Vagina (tissue), 2 donors: ENCODE measurements at regions of chr6 and their contacts with region 1.

Region 1: DNA sequence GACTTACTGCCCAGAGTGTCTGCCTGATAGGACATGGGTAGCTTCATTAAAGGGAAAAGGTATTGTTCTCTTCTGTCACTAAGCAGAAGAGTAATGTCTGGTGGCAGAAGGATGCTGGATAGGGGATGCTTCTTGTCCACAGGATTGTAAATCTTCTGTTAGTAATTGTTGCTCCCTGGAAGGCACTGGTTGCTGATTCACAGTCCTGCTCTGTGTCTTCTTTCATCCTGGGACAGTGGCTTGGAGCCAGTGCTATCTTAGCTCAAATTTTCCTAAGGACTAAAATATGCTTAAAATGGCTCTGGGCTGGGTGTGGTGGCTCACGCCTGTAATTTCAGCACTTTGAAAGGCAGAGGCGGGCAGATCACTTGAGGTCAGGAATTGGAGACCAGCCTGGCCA is 48.0 kb downstream of the SYTL3 start:
- DNase-seq: no peak
- H3K4me3 ChIP-seq: no peak overlapping the region
- H3K27ac ChIP-seq: no peak overlapping the region
- H3K4me1 ChIP-seq: no peaks in the 10 kb centered on the region
- H3K27me3 ChIP-seq: no peaks in the 10 kb centered on the region
- CTCF ChIP-seq: no peak
- POLR2A ChIP-seq: no peak

Region 2: GRCh38 chr6:158220786-158221442 is 476.9 kb before region 1 on chr6:
- intact Hi-C with region 1: loop called (anchors 10 kb)
- DNase-seq: no peak
- H3K4me3 ChIP-seq: no peak overlapping the region
- H3K27ac ChIP-seq: no peak overlapping the region
- H3K4me1 ChIP-seq: no peaks in the 10 kb centered on the region
- H3K27me3 ChIP-seq: no peaks in the 10 kb centered on the region
- CTCF ChIP-seq: peak; percentile 73 to 89 (median 81)
- POLR2A ChIP-seq: no peak